Mammary epithelial cell (primary cell): ENCODE measurements at regions of chrX and their contacts with region 1.

Region 1: GRCh38 chrX:46184749-46185148 is 360.5 kb downstream of the ZNF674 start:
- DNase-seq: peak; percentile 87
- H3K4me3 ChIP-seq: no peak overlapping the region
- H3K27ac ChIP-seq: peak overlapping the region; percentile 75
- H3K4me1 ChIP-seq: peaks cover 48% of the 10 kb centered on the region
- H3K27me3 ChIP-seq: no peaks in the 10 kb centered on the region
- CTCF ChIP-seq: no peak

Region 2: GRCh38 chrX:46200413-46200812 is 15.7 kb after region 1 on chrX:
- CTCF ChIA-PET with region 1: no interaction called
- dilution Hi-C with region 1: no loop called
- in situ Hi-C with region 1: no loop called
- intact Hi-C with region 1: loop called (anchors 2 kb)
- DNase-seq: no peak
- H3K4me3 ChIP-seq: no peak overlapping the region
- H3K27ac ChIP-seq: no peak overlapping the region
- H3K4me1 ChIP-seq: peaks cover 12% of the 10 kb centered on the region
- H3K27me3 ChIP-seq: no peaks in the 10 kb centered on the region
- CTCF ChIP-seq: no peak

Region 3: GRCh38 chrX:46208225-46208854 is 23.6 kb after region 1 on chrX:
- CTCF ChIA-PET with region 1: no interaction called
- dilution Hi-C with region 1: no loop called
- in situ Hi-C with region 1: no loop called
- intact Hi-C with region 1: loop called (anchors 2 kb)
- DNase-seq: peak; percentile 65
- H3K4me3 ChIP-seq: no peak overlapping the region
- H3K27ac ChIP-seq: peak overlapping the region; percentile 50
- H3K4me1 ChIP-seq: peaks cover 41% of the 10 kb centered on the region
- H3K27me3 ChIP-seq: no peaks in the 10 kb centered on the region
- CTCF ChIP-seq: no peak

Region 4: GRCh38 chrX:46260513-46260912 is 75.8 kb after region 1 on chrX:
- CTCF ChIA-PET with region 1: no interaction called
- dilution Hi-C with region 1: no loop called
- in situ Hi-C with region 1: no loop called
- intact Hi-C with region 1: loop called (anchors 2 kb)
- DNase-seq: peak; percentile 97
- H3K4me3 ChIP-seq: no peak overlapping the region
- H3K27ac ChIP-seq: peak overlapping the region; percentile 98
- H3K4me1 ChIP-seq: peaks cover 60% of the 10 kb centered on the region
- H3K27me3 ChIP-seq: no peaks in the 10 kb centered on the region
- CTCF ChIP-seq: peak in 1 of 2 donors; percentile 12